Endothelial cell of umbilical vein (primary cell): ENCODE measurements at regions of chr5 and their contacts with region 1.

Region 1: DNA sequence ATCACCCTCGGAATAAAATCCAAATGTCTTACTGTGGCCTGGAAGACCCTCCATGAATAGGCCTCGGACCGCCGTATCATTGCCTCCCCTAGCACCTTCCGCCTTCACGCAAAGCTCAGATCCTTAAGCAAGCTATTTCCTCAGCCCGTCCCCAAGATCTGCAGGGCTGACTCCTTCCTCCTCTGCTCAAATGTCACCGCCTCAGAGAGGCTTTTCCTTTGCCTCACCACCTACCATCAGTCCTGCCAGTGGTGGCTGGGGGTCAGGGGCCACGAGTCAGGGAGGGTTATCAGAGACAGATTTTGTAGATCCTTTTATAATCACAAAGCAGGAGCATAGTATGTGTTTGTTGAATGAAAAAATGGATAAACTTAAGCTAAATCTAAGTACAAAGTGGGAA is 74.4 kb upstream of the KIF2A start:
- DNase-seq: no peak
- H3K4me3 ChIP-seq: no peak overlapping the region
- H3K27ac ChIP-seq: no peak overlapping the region
- H3K4me1 ChIP-seq: no peaks in the 10 kb centered on the region
- H3K27me3 ChIP-seq: no peaks in the 10 kb centered on the region
- CTCF ChIP-seq: no peak
- POLR2A ChIP-seq: no peak

Region 2: DNA sequence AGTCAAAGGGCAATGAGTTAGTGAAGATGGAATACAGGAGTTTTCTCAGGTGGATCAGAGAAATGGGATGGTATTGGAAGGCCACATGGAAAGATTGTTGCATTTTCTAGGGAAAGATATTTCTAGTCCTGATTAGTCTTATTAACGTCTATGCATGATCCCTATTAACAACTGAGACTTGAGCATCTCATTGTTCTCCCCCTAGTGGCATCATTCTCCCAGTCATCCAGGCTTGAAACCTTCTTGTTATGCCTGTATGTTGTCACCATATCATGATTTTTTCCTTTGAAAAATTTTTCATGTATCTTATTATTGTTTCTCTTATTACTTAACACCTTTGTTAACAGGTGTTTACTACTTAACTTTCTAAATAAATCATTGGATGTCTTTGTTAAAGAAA is 108.8 kb after region 1 on chr5:
- CTCF ChIA-PET with region 1: no interaction called
- POLR2A ChIA-PET with region 1: no interaction called
- dilution Hi-C with region 1: no loop called
- intact Hi-C with region 1: loop called (anchors 5 kb)
- DNase-seq: peak; percentile 27
- H3K4me3 ChIP-seq: no peak overlapping the region
- H3K27ac ChIP-seq: no peak overlapping the region
- H3K4me1 ChIP-seq: peaks cover 9% of the 10 kb centered on the region
- H3K27me3 ChIP-seq: no peaks in the 10 kb centered on the region
- CTCF ChIP-seq: no peak
- POLR2A ChIP-seq: no peak